ENCODE measurements at regions of chr7 and their contacts with region 1.

Region 1: GRCh38 chr7:134327896-134328295 is 11.2 kb upstream of the SLC35B4 start:
- DNase-seq: peak in 1 of 2 donors; percentile 29
- H3K4me3 ChIP-seq: no peak overlapping the region
- H3K27ac ChIP-seq: no peak overlapping the region
- H3K4me1 ChIP-seq: no peaks in the 10 kb centered on the region
- H3K27me3 ChIP-seq: peaks cover 0 to 8% of the 10 kb centered on the region in 2 donors
- CTCF ChIP-seq: no peak

Region 2: DNA sequence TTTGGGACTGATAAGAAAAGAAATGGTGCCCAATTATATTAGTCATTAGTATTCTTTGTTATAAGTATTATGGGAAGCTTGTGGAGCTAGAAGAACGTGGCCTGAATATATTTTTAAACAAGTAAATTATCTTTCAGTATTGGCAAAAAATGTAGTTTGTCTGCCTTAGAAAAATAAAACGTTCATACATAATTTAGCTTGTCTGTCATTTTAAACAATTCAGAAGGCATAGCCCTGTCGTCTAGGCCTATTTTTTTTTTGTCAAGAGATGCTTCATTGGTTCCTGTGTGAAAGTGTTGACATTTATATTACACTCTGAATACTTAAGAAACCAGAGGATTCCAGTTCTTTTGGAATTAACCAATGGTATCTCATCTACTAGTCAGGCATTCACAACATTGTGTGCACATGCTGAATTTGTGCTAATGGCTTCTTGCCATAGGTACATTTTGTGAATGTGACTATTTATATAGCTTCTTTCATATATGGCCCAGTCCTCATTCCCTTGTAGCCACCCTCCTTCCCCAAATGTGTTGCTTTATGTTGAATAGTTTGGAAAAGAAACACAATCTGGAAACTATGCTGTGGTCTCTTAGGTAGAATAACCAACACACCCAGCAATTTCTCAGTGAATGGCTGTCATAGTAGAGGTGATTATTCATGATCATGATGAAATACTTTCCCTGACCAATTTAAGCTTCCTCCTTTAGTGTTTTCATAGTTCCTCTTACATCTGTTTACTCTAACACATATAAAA is 639.2 kb before region 1 on chr7:
- intact Hi-C with region 1: no loop called
- DNase-seq: no peak
- H3K4me3 ChIP-seq: no peak overlapping the region
- H3K27ac ChIP-seq: no peak overlapping the region
- H3K4me1 ChIP-seq: peaks cover 0 to 12% (median 0%) of the 10 kb centered on the region in 4 donors
- H3K27me3 ChIP-seq: no peaks in the 10 kb centered on the region
- CTCF ChIP-seq: no peak

Region 3: DNA sequence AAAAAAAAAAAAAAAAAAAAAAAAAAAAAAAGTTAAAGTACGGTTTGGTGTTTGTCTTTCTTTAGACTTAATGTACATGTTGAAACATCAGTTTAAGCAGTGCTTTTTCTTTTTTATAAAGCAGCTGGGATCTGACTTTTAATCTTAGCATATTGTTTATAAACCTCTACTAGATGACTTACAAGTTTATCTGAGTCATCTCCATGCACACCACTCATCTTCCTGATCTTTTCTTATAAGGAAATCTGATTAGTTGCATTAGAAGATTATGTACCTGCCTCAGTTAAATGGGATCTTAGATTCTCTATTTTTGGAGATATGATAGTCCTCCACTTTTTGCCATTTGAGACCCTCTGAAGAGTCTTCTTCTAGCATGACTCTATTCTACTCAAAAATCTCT is 592.7 kb before region 1 on chr7:
- intact Hi-C with region 1: no loop called
- DNase-seq: no peak
- H3K4me3 ChIP-seq: no peak overlapping the region
- H3K27ac ChIP-seq: no peak overlapping the region
- H3K4me1 ChIP-seq: no peaks in the 10 kb centered on the region
- H3K27me3 ChIP-seq: no peaks in the 10 kb centered on the region
- CTCF ChIP-seq: no peak

Region 4: GRCh38 chr7:134298902-134299683 is 28.8 kb before region 1 on chr7:
- intact Hi-C with region 1: no loop called
- DNase-seq: no peak
- H3K4me3 ChIP-seq: no peak overlapping the region
- H3K27ac ChIP-seq: no peak overlapping the region
- H3K4me1 ChIP-seq: no peaks in the 10 kb centered on the region
- H3K27me3 ChIP-seq: no peaks in the 10 kb centered on the region
- CTCF ChIP-seq: no peak

Region 5: GRCh38 chr7:135965602-135966001 is 1637.7 kb after region 1 on chr7:
- intact Hi-C with region 1: loop called (anchors 10 kb)
- DNase-seq: no peak
- H3K4me3 ChIP-seq: no peak overlapping the region
- H3K27ac ChIP-seq: no peak overlapping the region
- H3K4me1 ChIP-seq: peaks cover 0 to 32% (median 2%) of the 10 kb centered on the region in 4 donors
- H3K27me3 ChIP-seq: no peaks in the 10 kb centered on the region
- CTCF ChIP-seq: no peak

Measured in tibial artery (tissue), 4 donors.